ENCODE measurements at regions of chr3 and their contacts with region 1.

Region 1: GRCh38 chr3:13881536-13882410 is 1.9 kb upstream of the WNT7A start:
- DNase-seq: no peak
- ATAC-seq: no peak
- H3K4me3 ChIP-seq: no peak overlapping the region
- H3K27ac ChIP-seq: no peak overlapping the region
- H3K4me1 ChIP-seq: peaks cover 11% of the 10 kb centered on the region
- H3K27me3 ChIP-seq: peaks cover 0 to 68% (median 36%) of the 10 kb centered on the region in 3 donors
- CTCF ChIP-seq: no peak

Region 2: DNA sequence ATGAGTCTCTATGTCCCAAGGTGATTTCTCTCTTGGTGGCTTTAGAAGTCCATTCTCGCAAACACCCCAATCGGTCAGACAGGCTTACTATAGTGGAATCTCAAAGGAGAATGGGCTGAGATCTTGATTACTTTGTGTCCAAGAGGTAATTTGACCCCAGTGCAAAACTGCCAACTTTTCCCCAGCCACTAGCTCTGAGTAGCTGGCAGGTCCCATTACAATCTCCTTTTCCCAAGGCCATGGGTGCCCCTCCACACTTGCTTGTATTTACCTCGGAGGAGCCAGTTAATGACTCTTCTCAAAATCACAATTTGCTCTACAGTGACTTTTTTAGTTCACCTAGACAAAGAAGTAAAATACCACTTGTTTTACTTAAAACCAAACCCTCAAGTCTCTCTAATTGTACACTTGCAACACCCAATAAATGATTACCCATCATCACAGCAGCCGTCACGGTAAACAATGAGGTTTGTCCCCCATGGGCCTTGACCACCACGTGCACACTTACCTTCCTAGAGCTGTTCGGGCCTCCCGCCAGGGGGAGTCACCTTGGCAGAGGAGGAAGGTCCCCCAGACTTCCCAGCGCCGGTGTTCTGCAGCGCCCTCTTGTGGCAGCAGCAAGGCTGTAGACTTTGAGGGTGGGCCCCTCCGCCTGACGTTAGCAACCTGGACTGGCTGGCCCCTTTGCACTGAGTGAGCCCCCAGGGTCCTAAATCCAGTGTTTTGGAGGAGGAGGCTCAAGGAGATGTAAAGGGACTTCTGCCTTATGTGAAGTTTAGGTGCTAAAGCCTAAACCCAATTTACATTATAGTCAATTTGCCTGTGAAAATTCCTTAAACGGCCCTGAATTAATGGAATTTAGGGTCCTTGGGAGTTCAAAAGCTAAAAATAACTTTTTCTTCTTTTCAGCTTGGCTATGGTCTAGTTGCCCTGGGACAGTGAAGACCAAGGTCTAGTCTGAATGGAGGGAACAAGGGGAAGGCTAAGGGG is 420.3 kb before region 1 on chr3:
- intact Hi-C with region 1: no loop called
- DNase-seq: peak; percentile 55 to 66
- ATAC-seq: peak in 3 of 4 donors; percentile 40 to 61 (median 53)
- H3K4me3 ChIP-seq: no peak overlapping the region
- H3K27ac ChIP-seq: peak overlapping the region; percentile 76
- H3K4me1 ChIP-seq: peaks cover 17% of the 10 kb centered on the region
- H3K27me3 ChIP-seq: no peaks in the 10 kb centered on the region
- CTCF ChIP-seq: peak; percentile 42

Region 3: DNA sequence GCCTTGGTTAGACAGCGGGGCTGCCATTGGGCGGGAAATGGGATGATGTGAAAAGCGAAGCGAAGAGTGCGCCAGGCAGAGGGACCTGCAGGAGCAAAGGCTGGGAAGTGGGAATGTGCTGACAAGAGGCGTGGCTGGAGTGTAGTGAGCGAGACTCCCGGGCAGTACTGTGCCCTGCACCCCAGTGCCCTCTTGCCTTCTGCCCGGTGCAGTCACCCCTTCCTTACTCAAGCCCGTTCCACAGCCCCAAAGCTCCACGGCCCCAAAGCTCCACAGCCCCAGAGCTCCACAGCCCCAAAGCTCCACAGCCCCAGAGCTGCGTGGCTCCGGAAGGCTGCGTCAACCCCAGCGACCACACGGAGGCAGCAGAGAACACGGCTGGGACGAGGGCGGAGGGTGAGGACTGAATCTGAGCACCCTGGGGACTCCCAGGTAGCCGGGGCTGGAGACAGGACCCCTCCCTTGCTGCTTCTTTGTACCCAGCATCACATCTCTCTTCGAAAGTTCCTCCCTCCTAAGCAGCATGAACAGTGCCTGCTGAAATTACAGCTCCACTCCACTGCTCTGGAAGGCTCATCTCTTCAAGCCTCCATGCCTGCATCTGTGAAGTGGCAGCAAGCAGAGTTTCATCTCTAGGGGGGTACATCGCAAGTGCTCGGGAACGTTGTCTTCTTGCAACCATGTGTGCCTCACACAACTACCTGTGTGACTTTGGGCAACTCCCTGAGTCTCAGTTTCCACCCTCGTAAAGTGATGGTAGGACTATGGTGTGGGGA is 223.9 kb before region 1 on chr3:
- intact Hi-C with region 1: loop called in 1 of 2 experiments (anchors 2 kb)
- DNase-seq: peak in 1 of 2 donors; percentile 45
- ATAC-seq: peak; percentile 74 to 81 (median 80)
- H3K4me3 ChIP-seq: no peak overlapping the region
- H3K27ac ChIP-seq: no peak overlapping the region
- H3K4me1 ChIP-seq: no peaks in the 10 kb centered on the region
- H3K27me3 ChIP-seq: peaks cover 0 to 30% (median 11%) of the 10 kb centered on the region in 3 donors
- CTCF ChIP-seq: peak; percentile 58

Region 4: DNA sequence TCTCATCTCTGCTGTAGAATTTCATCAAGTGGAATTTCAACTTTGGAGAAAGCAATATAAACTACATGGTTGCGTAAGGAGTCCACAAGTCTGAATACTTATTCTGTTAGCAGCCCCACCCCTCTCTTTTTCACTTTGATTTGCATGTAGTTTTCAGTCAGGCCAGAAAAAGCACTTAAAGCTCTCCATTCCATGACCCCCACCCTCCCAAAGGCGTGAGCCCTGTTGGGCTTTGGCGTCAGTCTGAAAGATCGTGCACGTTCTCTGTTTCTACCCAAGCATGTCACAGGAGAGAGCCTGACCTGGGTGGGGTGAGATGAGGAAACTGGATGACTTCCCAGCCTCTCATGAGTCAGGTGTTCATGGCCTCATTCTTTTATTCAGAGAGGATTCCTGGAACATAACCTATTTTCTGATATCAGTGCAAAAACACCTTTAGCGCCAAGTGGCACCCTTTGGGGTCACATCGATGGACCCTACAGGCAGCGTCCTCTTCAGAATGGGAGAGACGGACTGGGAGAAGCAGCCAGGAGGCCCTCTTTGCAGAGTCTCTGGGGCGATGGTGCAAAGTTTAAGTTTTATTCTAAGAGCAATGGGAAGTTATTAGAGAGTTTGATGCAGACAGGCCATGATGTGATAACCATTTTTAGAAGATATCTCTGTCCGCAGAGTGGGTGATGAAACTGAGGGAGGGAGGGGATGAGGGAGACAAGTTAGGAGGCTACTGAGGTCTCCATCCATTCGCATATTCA is 352.7 kb after region 1 on chr3:
- intact Hi-C with region 1: no loop called
- DNase-seq: no peak
- ATAC-seq: peak; percentile 36 to 79 (median 70)
- H3K4me3 ChIP-seq: no peak overlapping the region
- H3K27ac ChIP-seq: no peak overlapping the region
- H3K4me1 ChIP-seq: no peaks in the 10 kb centered on the region
- H3K27me3 ChIP-seq: peaks cover 0 to 5% (median 2%) of the 10 kb centered on the region in 3 donors
- CTCF ChIP-seq: no peak